ENCODE measurements at regions of chr1 and their contacts with region 1.

Region 1: DNA sequence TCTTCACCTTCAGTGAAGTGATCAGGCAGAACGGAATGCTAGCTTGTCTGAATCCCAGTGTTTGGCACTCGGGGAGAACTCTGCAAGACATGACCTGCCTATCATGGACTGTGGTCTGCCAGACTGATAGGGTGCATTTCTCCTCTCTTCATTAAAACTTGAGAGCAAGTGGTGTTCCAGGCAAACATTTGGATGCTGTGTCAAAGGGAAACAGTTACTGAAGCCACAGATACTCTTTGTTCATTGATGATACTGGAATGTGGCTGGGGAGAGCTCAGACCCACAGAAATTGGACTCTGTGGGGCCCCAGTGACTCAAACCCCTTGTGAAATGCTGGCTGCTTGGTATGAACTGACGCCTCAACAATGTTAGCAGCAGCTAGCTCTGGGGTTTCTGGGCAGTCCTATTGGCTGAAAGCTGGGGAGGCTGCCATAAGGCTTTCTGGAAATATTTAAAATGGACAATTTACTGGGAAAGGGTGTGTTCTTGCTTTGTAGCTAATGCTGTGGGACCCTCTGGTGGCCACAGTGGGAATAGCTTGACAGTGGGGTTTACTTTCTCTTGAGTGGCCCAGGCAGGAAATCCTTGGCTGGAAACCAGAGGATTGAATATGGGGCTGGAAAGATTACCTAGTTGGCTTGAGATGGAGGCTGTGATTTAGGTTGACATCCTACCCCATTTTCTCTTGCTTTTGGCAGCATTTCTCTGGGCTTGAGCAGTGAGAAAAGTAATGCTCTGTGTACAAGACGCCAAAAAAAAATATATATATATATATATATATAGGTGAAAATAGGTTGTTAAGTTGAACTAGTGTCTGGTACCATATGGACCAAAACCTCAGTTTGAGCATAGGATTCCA is 8.0 kb upstream of the S100A10 start:
- DNase-seq: peak; percentile 85
- ATAC-seq: peak; percentile 79
- H3K4me3 ChIP-seq: no peak overlapping the region
- H3K27ac ChIP-seq: no peak overlapping the region
- H3K4me1 ChIP-seq: peaks cover 4 to 19% of the 10 kb centered on the region in 2 experiments; a peak in 3 of 4 replicates
- H3K27me3 ChIP-seq: no peaks in the 10 kb centered on the region
- CTCF ChIP-seq: peak; percentile 91 to 95 (median 92)
- POLR2A ChIP-seq: no peak
- RAD21 ChIP-seq: peak; percentile 96

Region 2: DNA sequence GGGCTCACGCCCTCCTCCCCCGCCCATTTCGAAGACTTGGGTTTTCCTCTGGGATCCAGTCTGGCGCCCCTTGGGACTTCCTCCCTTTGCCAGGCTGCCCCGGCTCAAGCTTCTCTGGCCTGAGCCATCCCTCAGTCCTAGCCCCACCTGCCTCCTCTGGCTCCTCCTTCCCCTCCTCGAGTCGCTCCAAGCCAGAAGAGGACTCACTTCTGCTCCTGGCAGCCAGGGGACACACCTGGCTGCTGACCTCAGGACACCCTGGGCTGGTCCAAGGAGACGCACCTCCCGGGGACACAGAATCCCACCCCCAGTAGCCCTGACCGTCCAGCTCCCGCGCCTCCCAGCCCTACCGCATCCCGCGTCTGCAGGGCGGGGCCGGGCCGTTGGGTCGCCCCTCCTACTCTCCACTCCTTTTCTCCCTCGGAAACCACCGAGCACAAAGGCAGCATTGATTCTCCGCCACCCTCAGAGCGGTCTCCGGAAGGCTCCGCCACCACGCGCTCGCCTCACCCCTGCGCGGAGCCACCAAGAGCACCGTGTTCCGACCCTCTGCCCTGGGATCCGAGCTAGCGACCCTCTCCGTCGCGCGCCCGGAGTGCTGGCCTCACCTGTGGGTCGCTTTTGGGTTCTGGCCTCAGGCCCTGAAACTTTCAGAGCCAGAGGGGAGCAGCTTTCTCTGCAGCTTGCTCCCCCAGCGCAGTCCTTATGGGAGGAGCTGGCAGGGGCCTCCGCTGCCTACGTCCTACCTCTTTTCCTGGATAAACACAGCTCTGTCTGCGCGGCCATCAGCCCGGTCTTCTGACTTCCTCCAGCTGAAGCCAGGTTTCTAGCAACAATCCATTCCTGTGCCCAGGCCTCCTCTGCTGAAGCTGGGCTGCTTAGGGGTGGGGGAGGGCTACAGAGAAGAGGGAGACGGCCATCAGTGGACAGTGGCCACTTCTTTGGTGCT is 161.9 kb before region 1 on chr1 and contains the start of gene C2CD4D:
- CTCF ChIA-PET with region 1: interaction called, 7 read pairs
- POLR2A ChIA-PET with region 1: no interaction called
- RAD21 ChIA-PET with region 1: interaction called in 1 of 2 experiments, 3 read pairs
- intact Hi-C with region 1: loop called (anchors 1 kb)
- DNase-seq: peak; percentile 27
- ATAC-seq: peak; percentile 73
- H3K4me3 ChIP-seq: peak within 1 kb of the TSS; percentile 31 to 51
- H3K27ac ChIP-seq: peak within 1 kb of the TSS; percentile 32; the same call in 1 of the 2 replicates
- H3K4me1 ChIP-seq: peaks cover 0 to 45% of the 10 kb centered on the region in 2 experiments; a peak in 2 of 4 replicates
- H3K27me3 ChIP-seq: no peaks in the 10 kb centered on the region
- CTCF ChIP-seq: no peak
- POLR2A ChIP-seq: no peak
- RAD21 ChIP-seq: no peak
- total RNA-seq, gene C2CD4D: 0.17 TPM

Region 3: GRCh38 chr1:151898513-151898991 is 103.1 kb before region 1 on chr1:
- CTCF ChIA-PET with region 1: interaction called, 10 read pairs
- POLR2A ChIA-PET with region 1: no interaction called
- RAD21 ChIA-PET with region 1: no interaction called
- intact Hi-C with region 1: no loop called
- DNase-seq: no peak
- ATAC-seq: no peak
- H3K4me3 ChIP-seq: no peak overlapping the region
- H3K27ac ChIP-seq: no peak overlapping the region
- H3K4me1 ChIP-seq: peaks cover 3 to 13% of the 10 kb centered on the region in 2 experiments; a peak in 3 of 4 replicates
- H3K27me3 ChIP-seq: no peaks in the 10 kb centered on the region
- CTCF ChIP-seq: no peak
- POLR2A ChIP-seq: no peak
- RAD21 ChIP-seq: no peak

Region 4: DNA sequence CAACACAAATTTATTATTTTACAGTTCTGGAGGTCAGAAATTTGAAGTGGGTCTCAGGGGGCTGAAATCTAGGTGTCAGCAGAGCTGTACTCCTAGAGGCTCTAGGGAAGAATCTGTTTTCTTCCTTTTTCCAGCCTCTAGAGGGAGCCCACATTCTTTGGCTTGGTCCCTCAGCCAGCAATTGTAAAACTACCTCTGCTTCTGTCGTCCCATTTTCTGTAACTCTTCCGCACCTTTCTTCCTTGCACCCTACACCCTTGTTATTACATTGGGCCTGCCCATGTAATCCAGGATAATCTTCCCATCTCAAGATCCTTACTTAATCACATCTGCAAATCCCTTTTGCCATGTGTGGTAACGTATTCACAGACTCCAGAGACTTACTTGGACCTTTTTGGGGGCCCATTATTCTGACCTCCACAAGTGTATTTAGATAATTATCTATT is 67.5 kb before region 1 on chr1:
- CTCF ChIA-PET with region 1: interaction called, 140 read pairs
- POLR2A ChIA-PET with region 1: interaction called, 3 read pairs
- RAD21 ChIA-PET with region 1: interaction called, 9 to 11 read pairs
- intact Hi-C with region 1: loop called (anchors 1 kb)
- DNase-seq: no peak
- ATAC-seq: peak; percentile 97
- H3K4me3 ChIP-seq: no peak overlapping the region
- H3K27ac ChIP-seq: no peak overlapping the region
- H3K4me1 ChIP-seq: no peaks in the 10 kb centered on the region; a peak in 1 of 4 replicates
- H3K27me3 ChIP-seq: no peaks in the 10 kb centered on the region
- CTCF ChIP-seq: peak; percentile 86 to 95 (median 86)
- POLR2A ChIP-seq: no peak
- RAD21 ChIP-seq: peak; percentile 96

Region 5: DNA sequence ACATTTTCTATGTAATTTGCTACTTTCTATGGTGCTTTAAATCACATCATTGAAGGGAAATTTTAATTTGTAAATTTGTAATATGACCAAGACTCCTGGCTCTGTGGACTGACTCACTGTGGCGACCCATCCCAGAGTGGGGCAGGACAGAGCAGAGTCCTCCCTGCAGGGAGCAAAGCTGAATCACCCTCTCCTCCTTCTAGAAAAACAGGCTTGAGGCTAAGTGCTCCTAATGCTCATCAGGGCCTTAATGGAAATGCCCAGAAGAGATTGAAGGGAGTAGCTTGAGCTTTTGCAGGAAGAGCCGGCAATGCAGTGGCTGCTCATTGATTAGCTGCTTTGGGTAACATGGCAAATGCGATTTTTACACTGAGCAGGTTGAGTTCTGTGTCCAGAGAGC is 24.8 kb before region 1 on chr1:
- CTCF ChIA-PET with region 1: interaction called, 22 read pairs
- POLR2A ChIA-PET with region 1: no interaction called
- RAD21 ChIA-PET with region 1: interaction called, 3 to 5 read pairs
- intact Hi-C with region 1: no loop called
- DNase-seq: no peak
- ATAC-seq: peak; percentile 78
- H3K4me3 ChIP-seq: no peak overlapping the region
- H3K27ac ChIP-seq: peak overlapping the region; percentile 32; the same call in 1 of the 2 replicates
- H3K4me1 ChIP-seq: peaks cover 59 to 84% of the 10 kb centered on the region in 2 experiments
- H3K27me3 ChIP-seq: no peaks in the 10 kb centered on the region
- CTCF ChIP-seq: no peak
- POLR2A ChIP-seq: no peak
- RAD21 ChIP-seq: no peak

Region 6: GRCh38 chr1:152034646-152035405 is 33.2 kb after region 1 on chr1:
- CTCF ChIA-PET with region 1: interaction called, 10 read pairs
- POLR2A ChIA-PET with region 1: interaction called, 3 read pairs
- RAD21 ChIA-PET with region 1: no interaction called
- intact Hi-C with region 1: no loop called
- DNase-seq: peak; percentile 79
- ATAC-seq: peak; percentile 62
- H3K4me3 ChIP-seq: peak overlapping the region; percentile 64 to 70
- H3K27ac ChIP-seq: peak overlapping the region; percentile 79
- H3K4me1 ChIP-seq: peaks cover 19 to 28% of the 10 kb centered on the region in 2 experiments
- H3K27me3 ChIP-seq: no peaks in the 10 kb centered on the region
- CTCF ChIP-seq: peak; percentile 52 to 79 (median 78); a peak in 5 of 6 replicates
- POLR2A ChIP-seq: no peak
- RAD21 ChIP-seq: peak; percentile 53

Region 7: GRCh38 chr1:152053375-152053774 is 51.8 kb after region 1 on chr1:
- CTCF ChIA-PET with region 1: no interaction called
- POLR2A ChIA-PET with region 1: no interaction called
- RAD21 ChIA-PET with region 1: no interaction called
- intact Hi-C with region 1: no loop called
- DNase-seq: no peak
- ATAC-seq: no peak
- H3K4me3 ChIP-seq: no peak overlapping the region
- H3K27ac ChIP-seq: no peak overlapping the region
- H3K4me1 ChIP-seq: peaks cover 12 to 32% of the 10 kb centered on the region in 2 experiments
- H3K27me3 ChIP-seq: peaks cover 40% of the 10 kb centered on the region
- CTCF ChIP-seq: no peak
- POLR2A ChIP-seq: no peak
- RAD21 ChIP-seq: no peak

Measured in HCT116 (cell line).